Sigmoid colon (tissue), 7 donors: ENCODE measurements at regions of chr1 and their contacts with region 1.

Region 1: GRCh38 chr1:84506002-84506728 is at the starts of genes GNG5 and SPATA1:
- DNase-seq: peak; percentile 99
- H3K4me3 ChIP-seq: peak within 1 kb of the TSS; percentile 71 to 79 (median 78)
- H3K27ac ChIP-seq: peak within 1 kb of the TSS; percentile 92 to 97 (median 96)
- H3K4me1 ChIP-seq: peaks cover 0 to 50% (median 34%) of the 10 kb centered on the region in 4 donors
- H3K27me3 ChIP-seq: no peaks in the 10 kb centered on the region
- CTCF ChIP-seq: no peak
- EP300 ChIP-seq: no peak
- POLR2A ChIP-seq: peak; percentile 76 to 80
- total RNA-seq, gene GNG5: 38.4 to 106 (median 76.2) TPM
- total RNA-seq, gene SPATA1: 0.36 to 0.83 (median 0.62) TPM

Region 2: GRCh38 chr1:84478876-84479868 is 27.0 kb before region 1 on chr1 and contains the start of gene RPF1:
- intact Hi-C with region 1: loop called (anchors 2 kb)
- DNase-seq: peak; percentile 79
- H3K4me3 ChIP-seq: peak within 1 kb of the TSS; percentile 68 to 81 (median 74)
- H3K27ac ChIP-seq: peak within 1 kb of the TSS; percentile 84 to 92 (median 88)
- H3K4me1 ChIP-seq: peaks cover 0 to 31% (median 20%) of the 10 kb centered on the region in 4 donors
- H3K27me3 ChIP-seq: peaks cover 0 to 22% (median 7%) of the 10 kb centered on the region in 3 donors
- CTCF ChIP-seq: no peak
- EP300 ChIP-seq: no peak
- POLR2A ChIP-seq: peak; percentile 61 to 63
- total RNA-seq, gene RPF1: 30.7 to 66.5 (median 41.8) TPM

Region 3: GRCh38 chr1:84541679-84542078 is 35.5 kb after region 1 on chr1:
- intact Hi-C with region 1: loop called (anchors 2 kb)
- DNase-seq: no peak
- H3K4me3 ChIP-seq: no peak overlapping the region
- H3K27ac ChIP-seq: peak overlapping the region in 2 of 4 donors; percentile 17 to 48
- H3K4me1 ChIP-seq: peaks cover 0 to 30% (median 8%) of the 10 kb centered on the region in 4 donors
- H3K27me3 ChIP-seq: no peaks in the 10 kb centered on the region
- CTCF ChIP-seq: peak in 2 of 4 experiments; percentile 12 to 19
- EP300 ChIP-seq: no peak
- POLR2A ChIP-seq: no peak

Region 4: GRCh38 chr1:84573967-84574842 is 68.0 kb after region 1 on chr1 and contains the start of gene CTBS:
- intact Hi-C with region 1: loop called (anchors 2 kb)
- DNase-seq: peak; percentile 95
- H3K4me3 ChIP-seq: peak within 1 kb of the TSS; percentile 63 to 75 (median 65)
- H3K27ac ChIP-seq: peak within 1 kb of the TSS; percentile 95 to 99 (median 98)
- H3K4me1 ChIP-seq: peaks cover 0 to 33% (median 18%) of the 10 kb centered on the region in 4 donors
- H3K27me3 ChIP-seq: no peaks in the 10 kb centered on the region
- CTCF ChIP-seq: no peak
- EP300 ChIP-seq: no peak
- POLR2A ChIP-seq: peak; percentile 55
- total RNA-seq, gene CTBS: 9.7 to 20.1 (median 14.2) TPM

Region 5: GRCh38 chr1:84598418-84598817 is 92.3 kb after region 1 on chr1:
- intact Hi-C with region 1: no loop called
- DNase-seq: no peak
- H3K4me3 ChIP-seq: no peak overlapping the region
- H3K27ac ChIP-seq: peak overlapping the region in 3 of 4 donors; percentile 23 to 67 (median 63)
- H3K4me1 ChIP-seq: peaks cover 0 to 28% (median 16%) of the 10 kb centered on the region in 4 donors
- H3K27me3 ChIP-seq: no peaks in the 10 kb centered on the region
- CTCF ChIP-seq: no peak
- EP300 ChIP-seq: peak in 2 of 4 donors; percentile 33 to 51
- POLR2A ChIP-seq: no peak

Region 6: DNA sequence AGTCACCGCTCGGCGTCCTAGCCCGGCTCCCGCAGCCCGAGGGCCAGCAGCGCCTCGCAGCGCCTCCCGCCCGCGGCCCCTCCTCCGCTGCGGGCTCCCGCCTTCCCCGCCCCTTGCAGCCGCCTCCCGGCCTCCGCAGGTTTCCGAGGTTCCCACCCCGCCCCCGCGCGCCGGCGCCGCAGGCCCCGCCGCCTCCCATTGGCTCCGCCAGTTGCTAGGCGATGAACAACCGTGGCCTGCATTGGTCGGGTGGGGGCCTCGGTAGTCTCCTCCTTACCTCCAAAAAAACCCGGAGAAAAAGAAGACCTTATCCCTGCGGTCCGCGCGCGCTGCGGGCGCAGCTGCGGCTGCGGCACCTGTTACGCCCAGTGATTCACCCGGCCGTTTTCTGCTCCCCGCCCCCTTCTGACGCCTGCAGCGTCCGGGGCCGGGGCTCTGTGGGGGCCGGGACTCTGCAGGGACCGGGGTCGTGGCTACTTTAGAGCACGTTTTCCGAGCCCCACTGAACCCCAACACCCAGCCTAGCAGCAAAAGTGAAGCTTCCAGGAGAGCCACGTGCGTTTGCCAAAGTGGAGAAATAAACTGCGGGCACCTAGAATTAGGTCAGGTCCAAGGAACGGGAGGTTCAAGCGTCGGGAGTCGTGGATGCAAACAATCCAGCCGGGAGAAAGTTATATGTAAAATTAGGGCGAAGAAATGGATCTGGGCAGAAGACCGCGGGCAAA is 184.4 kb after region 1 on chr1 and contains the start of gene SSX2IP:
- intact Hi-C with region 1: loop called (anchors 2 kb)
- DNase-seq: peak; percentile 99
- H3K4me3 ChIP-seq: peak within 1 kb of the TSS; percentile 79 to 92 (median 88)
- H3K27ac ChIP-seq: peak within 1 kb of the TSS; percentile 90 to 96 (median 94)
- H3K4me1 ChIP-seq: peaks cover 0 to 45% (median 18%) of the 10 kb centered on the region in 4 donors
- H3K27me3 ChIP-seq: no peaks in the 10 kb centered on the region
- CTCF ChIP-seq: no peak
- EP300 ChIP-seq: peak in 2 of 4 donors; percentile 14 to 23
- POLR2A ChIP-seq: peak; percentile 43 to 59
- total RNA-seq, gene SSX2IP: 24.7 to 57.6 (median 30.0) TPM